Panc1 (cell line): ENCODE measurements at regions of chr11 and their contacts with region 1.

Region 1: DNA sequence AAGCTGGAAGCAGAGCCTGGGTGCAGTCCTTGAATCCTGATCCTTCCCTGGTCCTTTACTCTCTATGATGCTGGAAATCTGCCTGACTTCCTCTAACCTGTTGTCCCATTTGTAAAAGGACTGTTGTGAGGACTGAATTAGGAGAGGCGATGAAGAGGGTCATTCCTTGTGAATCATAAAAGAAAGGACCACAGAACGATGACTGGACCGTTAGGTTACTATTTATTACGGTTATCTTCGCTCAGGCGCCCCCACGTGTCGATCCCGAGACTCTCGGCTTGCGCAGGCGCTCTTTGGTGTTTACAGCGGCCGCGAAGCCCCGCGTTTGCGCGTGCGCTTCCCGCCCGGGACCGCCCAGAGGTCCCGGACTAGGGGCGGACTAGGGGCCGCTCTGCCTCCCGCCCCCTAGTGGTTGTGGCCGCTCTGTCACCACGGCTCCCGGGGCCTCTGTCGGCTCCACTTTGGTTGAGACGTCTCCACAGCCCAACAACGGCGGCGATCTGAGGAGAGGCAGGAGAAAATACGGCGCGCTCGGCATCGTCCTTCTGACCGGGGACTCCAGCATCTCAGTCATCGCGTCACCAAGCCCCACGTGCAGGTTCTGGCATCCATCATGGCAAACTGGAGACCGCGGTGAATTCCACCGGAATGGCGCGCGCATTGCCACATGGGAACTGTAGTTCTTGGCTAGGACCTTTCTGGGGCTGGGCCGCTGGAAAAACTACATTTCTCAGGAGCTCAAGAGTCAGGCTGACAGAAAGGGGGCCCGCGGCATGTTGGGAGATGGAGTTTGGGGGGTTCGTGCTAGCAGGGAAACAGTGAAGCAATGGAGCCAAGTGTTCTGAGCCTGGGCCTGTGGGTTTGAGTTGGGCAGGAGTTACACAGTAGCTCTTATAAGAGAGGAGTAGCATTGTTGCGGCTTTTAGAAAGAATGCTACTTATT is at the start of gene STARD10:
- DNase-seq: peak; percentile 82
- ATAC-seq: peak; percentile 98
- H3K4me3 ChIP-seq: peak within 1 kb of the TSS; percentile 71 to 79
- H3K27ac ChIP-seq: peak within 1 kb of the TSS; percentile 99
- H3K4me1 ChIP-seq: peaks cover 15% of the 10 kb centered on the region
- H3K27me3 ChIP-seq: no peaks in the 10 kb centered on the region
- CTCF ChIP-seq: peak; percentile 100
- total RNA-seq, gene STARD10: 32.1 TPM

Region 2: GRCh38 chr11:72724851-72725730 is 68.6 kb before region 1 on chr11:
- CTCF ChIA-PET with region 1: interaction called, 25 read pairs
- POLR2A ChIA-PET with region 1: no interaction called
- in situ Hi-C with region 1: no loop called
- intact Hi-C with region 1: loop called (anchors 5 kb)
- DNase-seq: peak; percentile 60
- ATAC-seq: peak; percentile 57
- H3K4me3 ChIP-seq: no peak overlapping the region
- H3K27ac ChIP-seq: no peak overlapping the region
- H3K4me1 ChIP-seq: peaks cover 19% of the 10 kb centered on the region
- H3K27me3 ChIP-seq: no peaks in the 10 kb centered on the region
- CTCF ChIP-seq: peak; percentile 96

Region 3: GRCh38 chr11:72736452-72737069 is 57.1 kb before region 1 on chr11:
- CTCF ChIA-PET with region 1: no interaction called
- POLR2A ChIA-PET with region 1: interaction called, 10 read pairs
- in situ Hi-C with region 1: no loop called
- intact Hi-C with region 1: no loop called
- DNase-seq: no peak
- ATAC-seq: peak; percentile 60
- H3K4me3 ChIP-seq: no peak overlapping the region
- H3K27ac ChIP-seq: no peak overlapping the region
- H3K4me1 ChIP-seq: peaks cover 7% of the 10 kb centered on the region
- H3K27me3 ChIP-seq: no peaks in the 10 kb centered on the region
- CTCF ChIP-seq: no peak

Region 4: GRCh38 chr11:72897506-72897905 is 103.8 kb after region 1 on chr11:
- CTCF ChIA-PET with region 1: no interaction called
- POLR2A ChIA-PET with region 1: no interaction called
- in situ Hi-C with region 1: no loop called
- intact Hi-C with region 1: no loop called
- DNase-seq: peak; percentile 45
- ATAC-seq: no peak
- H3K4me3 ChIP-seq: no peak overlapping the region
- H3K27ac ChIP-seq: no peak overlapping the region
- H3K4me1 ChIP-seq: no peaks in the 10 kb centered on the region
- H3K27me3 ChIP-seq: no peaks in the 10 kb centered on the region
- CTCF ChIP-seq: no peak